ENCODE measurements at regions of chr2 and their contacts with region 1.

Region 1: GRCh38 chr2:32772638-32773447 is 145.0 kb downstream of the TTC27 start:
- DNase-seq: peak; percentile 27 to 36 (median 27)
- H3K4me3 ChIP-seq: no peak overlapping the region
- H3K27ac ChIP-seq: no peak overlapping the region
- H3K4me1 ChIP-seq: peaks cover 0 to 12% (median 3%) of the 10 kb centered on the region in 4 experiments
- H3K27me3 ChIP-seq: no peaks in the 10 kb centered on the region

Region 2: DNA sequence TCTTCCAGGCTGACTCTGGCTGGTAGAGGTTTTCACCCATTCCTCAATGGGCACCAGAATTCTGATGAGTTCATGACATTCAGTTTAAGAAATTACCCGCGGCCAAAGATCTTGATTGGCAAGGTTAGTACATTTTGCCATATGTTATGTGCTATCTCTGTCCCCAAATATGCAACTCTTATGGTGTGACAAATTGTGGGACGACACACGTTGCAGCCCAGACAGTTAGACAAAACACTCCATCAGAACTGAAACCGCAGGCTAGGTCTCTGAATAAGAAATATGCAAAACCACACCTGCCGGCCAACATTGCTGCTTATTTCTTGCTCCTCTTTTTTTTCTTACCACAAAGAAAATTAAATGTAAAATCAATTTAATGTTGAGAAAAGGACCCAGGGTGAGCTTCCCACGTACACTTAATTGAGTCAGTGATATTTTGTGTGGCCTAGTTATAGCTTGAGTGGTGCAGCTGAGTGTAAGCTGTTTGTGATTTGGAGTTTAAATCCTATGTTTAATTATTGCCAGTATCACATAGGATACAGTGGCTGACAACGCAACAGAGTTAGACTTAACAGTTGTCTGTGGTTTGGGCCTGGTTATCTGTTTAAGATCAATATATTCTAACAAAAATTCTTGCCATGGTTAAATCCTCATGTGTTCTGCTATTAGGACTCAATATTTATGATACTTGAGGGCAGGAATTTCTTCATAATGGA is 138.2 kb after region 1 on chr2:
- CTCF ChIA-PET with region 1: no interaction called
- POLR2A ChIA-PET with region 1: no interaction called
- DNase-seq: no peak
- H3K4me3 ChIP-seq: no peak overlapping the region
- H3K27ac ChIP-seq: no peak overlapping the region
- H3K4me1 ChIP-seq: no peaks in the 10 kb centered on the region
- H3K27me3 ChIP-seq: no peaks in the 10 kb centered on the region

Region 3: DNA sequence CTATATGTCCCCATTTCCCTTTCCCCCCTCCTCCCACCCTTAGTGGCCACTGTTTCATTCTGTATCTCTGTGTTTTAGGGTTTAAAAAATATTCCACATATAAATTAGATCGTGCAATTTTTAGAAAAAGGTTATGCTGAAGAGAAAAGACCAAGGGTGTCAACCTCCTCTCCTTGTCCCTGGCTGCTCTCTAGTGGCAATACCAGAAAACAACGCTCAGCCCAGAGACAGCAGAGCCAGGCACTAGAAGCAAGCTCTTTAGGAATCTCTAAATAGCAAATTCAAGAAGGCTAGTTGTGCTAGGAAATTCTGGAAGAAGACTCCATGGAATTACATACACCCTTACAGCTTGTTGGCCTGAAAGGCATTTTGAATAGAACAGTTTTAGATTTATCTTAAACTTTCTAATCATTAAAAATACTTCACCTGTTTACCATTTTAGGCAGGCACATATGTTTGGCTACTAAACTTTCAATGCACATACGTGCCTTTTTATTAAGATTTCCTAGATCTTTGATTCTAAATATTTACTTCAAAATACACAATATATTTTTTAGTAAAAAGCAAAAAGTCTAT is 668.5 kb after region 1 on chr2:
- CTCF ChIA-PET with region 1: interaction called, 12 read pairs
- POLR2A ChIA-PET with region 1: no interaction called
- DNase-seq: peak; percentile 56 to 79 (median 75)
- H3K4me3 ChIP-seq: no peak overlapping the region
- H3K27ac ChIP-seq: no peak overlapping the region
- H3K4me1 ChIP-seq: peaks cover 6 to 30% (median 16%) of the 10 kb centered on the region in 4 experiments
- H3K27me3 ChIP-seq: no peaks in the 10 kb centered on the region